ENCODE measurements at regions of chr18 and their contacts with region 1.

Region 1: GRCh38 chr18:67010916-67011315 is 407.0 kb upstream of the CDH19 start:
- DNase-seq: peak; percentile 68
- ATAC-seq: peak; percentile 99
- H3K4me3 ChIP-seq: no peak overlapping the region
- H3K27ac ChIP-seq: no peak overlapping the region
- H3K4me1 ChIP-seq: peaks cover 7% of the 10 kb centered on the region; the same call in 1 of the 2 replicates
- H3K27me3 ChIP-seq: no peaks in the 10 kb centered on the region
- CTCF ChIP-seq: no peak

Region 2: GRCh38 chr18:66708646-66709045 is 302.3 kb before region 1 on chr18:
- CTCF ChIA-PET with region 1: no interaction called
- POLR2A ChIA-PET with region 1: no interaction called
- intact Hi-C with region 1: no loop called
- DNase-seq: no peak
- ATAC-seq: no peak
- H3K4me3 ChIP-seq: no peak overlapping the region
- H3K27ac ChIP-seq: no peak overlapping the region
- H3K4me1 ChIP-seq: no peaks in the 10 kb centered on the region
- H3K27me3 ChIP-seq: no peaks in the 10 kb centered on the region
- CTCF ChIP-seq: no peak

Region 3: GRCh38 chr18:67104700-67105284 is 93.9 kb after region 1 on chr18:
- CTCF ChIA-PET with region 1: no interaction called
- POLR2A ChIA-PET with region 1: no interaction called
- intact Hi-C with region 1: loop called (anchors 5 kb)
- DNase-seq: peak; percentile 80
- ATAC-seq: peak; percentile 96
- H3K4me3 ChIP-seq: no peak overlapping the region
- H3K27ac ChIP-seq: no peak overlapping the region
- H3K4me1 ChIP-seq: no peaks in the 10 kb centered on the region
- H3K27me3 ChIP-seq: no peaks in the 10 kb centered on the region
- CTCF ChIP-seq: peak; percentile 91

Measured in PC-3 (cell line).